PC-3 (cell line): ENCODE measurements at regions of chr3 and their contacts with region 1.

Region 1: DNA sequence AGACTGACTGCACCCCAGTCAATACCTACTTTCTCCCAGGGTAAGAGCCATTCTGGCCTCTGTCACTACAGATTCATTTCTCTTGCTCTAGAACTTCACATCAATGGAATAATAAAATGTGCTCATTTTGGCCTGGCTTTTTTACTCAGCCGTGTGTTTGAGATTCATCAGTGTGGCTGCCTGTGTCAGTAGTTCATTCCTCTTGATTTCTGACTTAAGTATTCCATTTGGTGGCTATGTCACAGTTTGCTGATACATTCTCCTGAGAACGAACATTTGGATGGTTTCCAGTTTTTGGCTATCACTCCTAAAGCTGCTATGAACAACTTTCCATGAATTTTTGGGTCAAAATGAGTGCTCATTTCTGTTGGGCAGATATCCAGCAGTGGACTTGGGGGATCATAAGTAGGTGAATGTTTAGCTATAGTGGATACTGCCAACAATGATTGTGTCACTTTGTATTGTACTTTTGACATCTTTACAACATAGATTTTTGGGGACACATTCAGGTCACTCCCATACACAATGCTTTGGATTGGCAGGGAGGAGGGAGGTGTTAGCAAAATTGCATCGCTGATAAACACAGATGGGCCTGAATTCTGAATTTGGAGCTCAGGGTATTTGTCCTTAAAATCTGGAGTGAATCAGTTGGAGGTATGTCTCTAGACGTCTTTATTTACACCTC is 19.8 kb upstream of the FAM107A start:
- DNase-seq: no peak
- ATAC-seq: no peak
- H3K4me3 ChIP-seq: no peak overlapping the region
- H3K27ac ChIP-seq: no peak overlapping the region
- H3K4me1 ChIP-seq: no peaks in the 10 kb centered on the region
- H3K27me3 ChIP-seq: no peaks in the 10 kb centered on the region
- CTCF ChIP-seq: no peak

Region 2: DNA sequence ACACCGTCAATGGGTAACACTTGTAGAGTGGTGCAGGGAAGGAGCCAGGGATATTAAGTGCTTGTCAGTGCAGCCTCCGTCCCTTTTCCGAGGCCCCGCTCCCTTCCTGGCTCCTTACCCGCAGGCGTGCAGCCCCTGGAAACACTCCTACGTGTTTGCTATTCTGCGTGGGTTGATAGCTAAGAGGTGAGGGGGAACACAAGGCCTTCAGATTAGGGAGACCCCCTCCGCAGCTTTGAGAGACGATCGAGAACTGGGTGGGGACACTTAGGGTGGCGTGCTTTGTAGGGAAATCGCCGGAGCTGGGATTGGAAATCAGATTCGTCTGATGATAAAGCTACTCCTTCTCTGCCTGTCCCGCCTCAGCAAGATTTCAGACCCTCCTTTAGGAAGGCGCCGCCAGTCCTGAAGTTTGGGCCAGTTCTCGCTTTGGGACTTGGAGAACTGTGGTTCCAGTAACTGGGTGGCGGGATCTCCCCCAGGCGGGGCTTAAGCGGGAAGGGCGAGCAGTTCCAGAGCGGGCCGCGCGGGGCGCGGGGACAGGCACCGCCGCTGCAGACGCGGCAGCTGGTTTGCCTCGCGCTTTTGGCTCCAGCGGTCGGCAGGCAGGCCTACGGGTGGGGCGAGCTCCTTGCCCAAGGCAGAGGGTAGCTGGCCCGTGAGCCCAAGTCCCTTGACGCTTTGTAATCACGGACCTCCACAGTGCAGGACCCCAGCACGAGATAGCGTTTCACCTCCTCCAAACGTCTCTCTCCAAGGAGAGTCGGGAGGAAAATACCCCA is 11.8 kb before region 1 on chr3:
- CTCF ChIA-PET with region 1: interaction called, 10 read pairs
- POLR2A ChIA-PET with region 1: no interaction called
- intact Hi-C with region 1: no loop called
- DNase-seq: peak; percentile 85
- ATAC-seq: peak; percentile 96
- H3K4me3 ChIP-seq: peak overlapping the region; percentile 87
- H3K27ac ChIP-seq: no peak overlapping the region
- H3K4me1 ChIP-seq: peaks cover 13% of the 10 kb centered on the region; the same call in 1 of the 2 replicates
- H3K27me3 ChIP-seq: no peaks in the 10 kb centered on the region
- CTCF ChIP-seq: peak; percentile 71